AG04450 (cell line): ENCODE measurements at regions of chr6 and their contacts with region 1.

Region 1: GRCh38 chr6:2103644-2104523 is 141.5 kb downstream of the GMDS start:
- DNase-seq: no peak
- H3K4me3 ChIP-seq: no peak overlapping the region
- H3K27ac ChIP-seq: no peak overlapping the region
- H3K27me3 ChIP-seq: no peaks in the 10 kb centered on the region
- CTCF ChIP-seq: peak; percentile 70

Region 2: GRCh38 chr6:1601158-1602048 is 502.5 kb before region 1 on chr6:
- CTCF ChIA-PET with region 1: interaction called, 30 read pairs
- POLR2A ChIA-PET with region 1: interaction called, 3 read pairs
- DNase-seq: no peak
- H3K4me3 ChIP-seq: no peak overlapping the region
- H3K27ac ChIP-seq: no peak overlapping the region
- H3K27me3 ChIP-seq: peaks cover 47% of the 10 kb centered on the region
- CTCF ChIP-seq: no peak

Region 3: GRCh38 chr6:1611572-1612298 is 492.1 kb before region 1 on chr6:
- CTCF ChIA-PET with region 1: interaction called, 30 read pairs
- POLR2A ChIA-PET with region 1: interaction called, 3 read pairs
- DNase-seq: no peak
- H3K4me3 ChIP-seq: peak overlapping the region; percentile 75
- H3K27ac ChIP-seq: peak overlapping the region; percentile 52
- H3K27me3 ChIP-seq: peaks cover 28% of the 10 kb centered on the region
- CTCF ChIP-seq: no peak

Region 4: GRCh38 chr6:1624851-1625781 is 478.8 kb before region 1 on chr6:
- CTCF ChIA-PET with region 1: interaction called, 11 read pairs
- POLR2A ChIA-PET with region 1: no interaction called
- DNase-seq: no peak
- H3K4me3 ChIP-seq: peak overlapping the region; percentile 69
- H3K27ac ChIP-seq: no peak overlapping the region
- H3K27me3 ChIP-seq: peaks cover 27% of the 10 kb centered on the region
- CTCF ChIP-seq: no peak

Region 5: DNA sequence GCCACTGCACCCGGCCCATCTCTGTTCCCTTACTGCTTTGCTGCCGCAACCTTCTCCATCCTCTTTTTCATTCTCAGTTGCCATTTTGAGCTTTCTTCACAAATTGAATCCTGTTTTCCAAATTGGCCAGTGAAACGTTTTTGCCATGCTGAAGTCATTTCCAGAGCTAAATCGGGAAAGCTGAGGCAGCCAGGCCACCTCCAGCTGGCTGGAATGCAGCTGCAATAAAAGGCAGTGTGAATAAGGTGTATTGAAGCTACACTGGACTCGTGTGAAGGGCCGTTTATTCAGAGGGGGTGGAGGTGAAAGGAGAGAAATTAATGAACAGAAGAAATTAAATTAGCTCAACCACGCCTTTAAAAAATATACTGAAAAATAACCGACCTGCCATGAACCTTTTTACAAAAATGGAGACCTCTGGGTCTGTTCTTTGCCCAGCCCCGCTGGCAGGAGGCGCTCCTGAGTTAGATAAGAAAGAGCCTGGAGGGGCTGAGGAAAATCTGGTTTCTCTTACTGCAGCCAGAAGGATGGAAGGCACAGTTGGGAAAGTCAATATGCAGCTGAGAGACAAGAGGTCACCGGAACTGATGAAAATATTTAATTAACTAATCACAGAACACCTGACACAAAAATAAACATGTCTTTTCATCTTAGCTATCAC is 210.3 kb before region 1 on chr6:
- CTCF ChIA-PET with region 1: interaction called, 22 read pairs
- POLR2A ChIA-PET with region 1: no interaction called
- DNase-seq: no peak
- H3K4me3 ChIP-seq: no peak overlapping the region
- H3K27ac ChIP-seq: no peak overlapping the region
- H3K27me3 ChIP-seq: no peaks in the 10 kb centered on the region
- CTCF ChIP-seq: peak; percentile 61

Region 6: GRCh38 chr6:2086326-2086965 is 17.4 kb before region 1 on chr6:
- CTCF ChIA-PET with region 1: interaction called, 10 read pairs
- POLR2A ChIA-PET with region 1: no interaction called
- DNase-seq: no peak
- H3K4me3 ChIP-seq: no peak overlapping the region
- H3K27ac ChIP-seq: no peak overlapping the region
- H3K27me3 ChIP-seq: no peaks in the 10 kb centered on the region
- CTCF ChIP-seq: no peak

Region 7: DNA sequence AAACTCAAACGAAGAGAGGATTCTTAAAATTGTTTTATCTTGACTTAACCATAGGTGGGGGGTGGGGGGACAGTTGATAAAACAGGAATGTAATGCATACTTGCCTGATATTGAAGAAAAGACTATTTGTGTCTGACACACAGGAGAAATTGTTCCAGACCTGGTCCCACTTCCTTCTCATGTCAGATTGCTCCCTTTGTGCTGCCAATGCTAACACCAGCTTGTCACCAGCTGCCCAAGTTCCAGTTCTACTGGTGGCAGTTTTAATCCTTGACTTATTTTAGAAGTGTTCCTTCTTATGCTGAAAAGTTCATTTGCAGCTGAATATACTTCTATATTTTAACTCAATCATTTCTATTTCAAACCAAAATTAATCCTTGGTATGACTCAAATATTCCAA is 14.3 kb after region 1 on chr6:
- CTCF ChIA-PET with region 1: interaction called, 18 read pairs
- POLR2A ChIA-PET with region 1: no interaction called
- DNase-seq: no peak
- H3K4me3 ChIP-seq: no peak overlapping the region
- H3K27ac ChIP-seq: no peak overlapping the region
- H3K27me3 ChIP-seq: no peaks in the 10 kb centered on the region
- CTCF ChIP-seq: no peak

Region 8: GRCh38 chr6:2264932-2265331 is 161.0 kb after region 1 on chr6:
- CTCF ChIA-PET with region 1: no interaction called
- POLR2A ChIA-PET with region 1: no interaction called
- DNase-seq: no peak
- H3K4me3 ChIP-seq: no peak overlapping the region
- H3K27ac ChIP-seq: no peak overlapping the region
- H3K27me3 ChIP-seq: no peaks in the 10 kb centered on the region
- CTCF ChIP-seq: no peak